ENCODE measurements at regions of chr19 and their contacts with region 1.

Region 1: DNA sequence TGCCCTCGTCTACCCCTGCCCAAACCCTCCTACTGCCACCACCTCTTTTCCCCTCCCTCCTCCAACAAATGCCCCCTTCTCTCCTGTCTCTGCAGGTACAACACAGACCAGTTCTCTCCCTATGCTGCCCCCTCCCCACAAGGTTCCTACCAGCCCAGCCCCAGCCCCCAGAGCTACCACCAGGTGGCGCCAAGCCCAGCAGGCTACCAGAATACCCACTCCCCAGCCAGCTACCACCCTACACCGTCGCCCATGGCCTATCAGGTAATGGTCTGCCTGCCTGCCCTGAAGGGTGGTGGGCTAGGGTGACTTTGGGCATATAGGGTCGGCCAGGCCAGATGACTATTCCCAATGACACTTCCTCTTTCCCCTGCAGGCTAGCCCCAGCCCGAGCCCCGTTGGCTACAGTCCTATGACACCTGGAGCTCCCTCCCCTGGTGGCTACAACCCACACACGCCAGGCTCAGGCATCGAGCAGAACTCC is 6.5 kb upstream of the TIMM50 start:
- DNase-seq: no peak
- ATAC-seq: peak; percentile 82
- H3K4me3 ChIP-seq: no peak overlapping the region
- H3K27ac ChIP-seq: no peak overlapping the region
- H3K4me1 ChIP-seq: no peaks in the 10 kb centered on the region
- H3K27me3 ChIP-seq: no peaks in the 10 kb centered on the region
- CTCF ChIP-seq: peak; percentile 45 to 91 (median 87); a peak in 5 of 6 replicates
- POLR2A ChIP-seq: no peak
- RAD21 ChIP-seq: peak; percentile 34; the same call in 1 of the 2 replicates

Region 2: DNA sequence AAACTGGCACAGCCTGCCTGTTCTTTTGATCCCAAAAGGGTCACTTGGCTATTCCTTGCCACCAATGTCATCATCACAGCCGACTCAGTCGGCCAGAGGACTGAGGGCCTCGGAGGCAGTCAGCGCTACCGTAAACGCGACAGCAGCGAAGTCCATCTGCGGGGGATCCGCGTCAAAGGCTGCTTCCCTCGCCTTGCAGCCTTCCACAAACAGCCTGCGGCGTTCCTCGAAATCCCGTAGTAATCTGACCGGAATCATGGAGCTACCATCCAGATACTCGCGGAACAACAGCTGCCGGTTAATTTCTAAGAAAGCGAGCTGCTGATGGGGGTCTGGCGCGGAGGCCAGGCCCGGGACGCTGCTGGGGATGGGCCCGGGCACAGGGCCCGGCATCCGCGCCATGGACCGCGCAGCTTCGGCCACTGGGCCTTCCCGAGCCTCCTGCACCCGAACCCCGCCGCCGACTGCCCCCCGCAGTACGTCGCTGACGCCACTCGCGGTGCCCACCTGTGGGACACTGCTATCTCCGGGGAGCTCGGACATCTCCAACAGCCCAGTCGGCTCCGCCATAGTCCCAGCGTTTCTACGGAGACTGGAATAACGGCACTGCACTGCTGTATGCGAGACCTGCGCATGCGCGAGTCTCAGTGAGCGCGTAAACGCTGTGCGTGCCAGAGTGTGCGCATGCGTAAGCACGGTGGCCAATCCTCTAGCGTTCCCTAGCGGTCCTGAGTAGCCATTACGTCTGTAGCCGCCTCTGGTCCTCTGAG is 58.2 kb after region 1 on chr19 and contains the start of gene EID2B:
- CTCF ChIA-PET with region 1: interaction called, 24 read pairs
- POLR2A ChIA-PET with region 1: no interaction called
- RAD21 ChIA-PET with region 1: no interaction called
- intact Hi-C with region 1: loop called (anchors 1 kb)
- DNase-seq: peak; percentile 88
- ATAC-seq: peak; percentile 97
- H3K4me3 ChIP-seq: peak within 1 kb of the TSS; percentile 67 to 82
- H3K27ac ChIP-seq: peak within 1 kb of the TSS; percentile 58
- H3K4me1 ChIP-seq: peaks cover 3 to 13% of the 10 kb centered on the region in 2 experiments; a peak in 3 of 4 replicates
- H3K27me3 ChIP-seq: no peaks in the 10 kb centered on the region
- CTCF ChIP-seq: peak; percentile 87 to 91 (median 89)
- POLR2A ChIP-seq: peak; percentile 93
- RAD21 ChIP-seq: peak; percentile 98
- total RNA-seq, gene EID2B: 1.2 TPM

Region 3: DNA sequence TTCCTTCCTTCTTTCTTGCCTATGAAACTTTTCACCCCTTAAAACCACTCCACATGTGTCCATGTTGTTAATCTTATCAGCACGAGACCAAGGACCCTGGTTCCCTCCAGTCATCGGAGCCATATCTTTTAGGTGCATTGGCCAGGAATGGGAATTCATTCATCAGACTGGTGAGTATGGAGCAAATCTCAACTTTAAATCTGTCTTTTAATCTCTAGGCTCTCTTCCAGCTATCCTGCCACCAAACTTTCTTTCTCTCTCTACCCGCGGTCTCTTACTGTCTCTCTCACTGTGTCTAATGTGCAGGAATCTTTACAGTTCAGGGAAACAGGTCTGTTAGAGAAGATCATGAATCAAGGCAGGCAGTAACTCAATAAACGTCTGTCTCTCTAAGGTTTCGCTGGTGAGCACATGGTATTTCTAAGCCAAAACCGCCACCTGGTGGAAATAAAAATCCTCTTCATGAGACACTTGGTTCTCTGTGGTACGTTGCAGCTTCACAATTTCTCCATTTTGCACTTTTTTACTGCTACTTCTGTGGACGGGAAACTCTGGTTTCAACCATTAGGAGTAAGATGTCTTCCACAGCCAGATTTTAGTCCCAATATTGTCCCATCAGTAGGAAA is 197.7 kb after region 1 on chr19:
- CTCF ChIA-PET with region 1: interaction called, 3 read pairs
- POLR2A ChIA-PET with region 1: no interaction called
- RAD21 ChIA-PET with region 1: no interaction called
- intact Hi-C with region 1: loop called (anchors 1 kb)
- DNase-seq: peak; percentile 66
- ATAC-seq: peak; percentile 96
- H3K4me3 ChIP-seq: no peak overlapping the region
- H3K27ac ChIP-seq: no peak overlapping the region
- H3K4me1 ChIP-seq: peaks cover 0 to 6% of the 10 kb centered on the region in 2 experiments; a peak in 1 of 4 replicates
- H3K27me3 ChIP-seq: 0 out of 2 replicates have a peak, but pooled peaks cover 3% of the 10 kb centered on the region
- CTCF ChIP-seq: peak; percentile 45 to 75 (median 62); a peak in 4 of 6 replicates
- POLR2A ChIP-seq: no peak
- RAD21 ChIP-seq: peak; percentile 92